Activated T-helper 2 cell treated with anti-CD3 and anti-CD28 coated beads, Interferon-gamma antibody, Interleukin-2, Interleukin-4, amounts not matched to agents 10 μg/mL and 5 μg/mL and 100 μg/mL, durations not matched to agents 14 hours and 24 hours and 36 hours (primary cell): ENCODE measurements at regions of chr21 and their contacts with region 1.

Region 1: DNA sequence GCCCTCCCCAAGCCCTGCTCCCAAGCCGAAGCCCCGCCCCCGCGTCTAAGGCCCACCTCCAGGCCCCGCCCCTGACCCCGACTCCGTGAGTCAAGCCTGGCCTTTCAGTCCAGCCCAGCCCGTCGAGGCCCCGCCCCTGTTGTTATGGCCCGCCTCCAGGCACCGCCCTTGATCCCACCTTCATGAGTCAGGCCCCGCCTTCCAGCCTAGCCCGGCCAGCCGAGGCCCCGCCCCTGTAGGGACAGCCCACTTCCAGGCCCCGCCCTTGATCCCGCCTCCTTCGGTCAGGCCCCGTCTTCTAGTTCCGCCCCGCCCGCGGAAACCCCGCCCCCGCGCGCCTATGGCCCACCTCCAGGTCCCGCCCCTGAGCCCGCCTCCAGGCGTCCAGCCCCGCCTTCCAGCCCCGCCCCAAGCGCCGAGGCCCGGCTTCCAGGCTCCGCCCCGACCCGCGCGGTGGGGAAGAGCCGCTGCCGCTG is 247 bp upstream of the DOP1B start:
- DNase-seq: peak; percentile 98
- H3K4me3 Mint-ChIP-seq: peak overlapping the region; percentile 76
- H3K27ac Mint-ChIP-seq: no peak overlapping the region
- H3K4me1 Mint-ChIP-seq: peaks cover 17% of the 10 kb centered on the region
- H3K27me3 Mint-ChIP-seq: no peaks in the 10 kb centered on the region

Region 2: DNA sequence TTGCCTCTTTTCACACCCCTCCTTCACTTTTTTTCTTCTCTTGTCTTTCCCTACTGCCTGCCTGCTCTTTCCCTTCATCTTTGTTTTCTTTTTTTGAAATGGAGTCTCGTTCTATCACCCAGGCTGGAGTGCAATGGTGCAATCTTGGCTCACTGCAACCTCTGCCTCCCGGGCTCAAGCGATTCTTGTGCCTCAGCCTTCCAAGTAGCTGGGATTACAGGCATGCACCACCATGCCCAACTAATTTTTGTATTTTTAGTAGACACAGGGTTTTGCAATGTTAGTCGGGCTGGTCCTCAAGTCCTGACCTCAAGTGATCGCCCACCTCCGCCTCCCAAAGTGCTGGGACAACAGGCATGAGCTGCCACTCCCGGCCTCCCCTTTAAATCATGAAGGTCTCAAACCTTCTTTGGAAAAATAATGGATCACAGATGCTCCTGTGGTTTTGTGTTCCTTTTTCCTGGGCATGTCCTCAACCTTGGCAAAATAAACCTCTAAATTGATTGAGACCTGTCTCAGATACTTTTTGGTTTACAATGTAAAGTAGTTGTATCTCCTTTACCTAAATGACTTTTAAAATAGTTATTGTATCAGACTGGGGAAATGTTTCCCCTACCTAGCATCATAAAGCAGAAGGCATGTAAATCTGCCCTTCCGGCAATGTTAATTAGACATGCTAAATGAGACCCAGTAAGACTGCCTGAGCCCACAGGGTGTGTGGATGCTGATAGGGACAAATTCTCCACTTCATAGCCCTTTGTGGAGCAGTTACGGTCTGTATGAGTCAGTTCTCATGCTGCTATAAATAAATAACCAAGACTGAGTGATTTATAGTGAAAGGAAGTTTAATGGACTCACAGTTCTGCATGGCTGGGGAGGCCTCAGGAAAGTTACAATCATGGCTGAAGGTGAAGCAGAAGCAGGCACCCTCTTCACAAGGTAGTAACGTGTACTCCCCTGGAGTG is 58.8 kb before region 1 on chr21:
- intact Hi-C with region 1: no loop called
- DNase-seq: no peak
- H3K4me3 Mint-ChIP-seq: no peak overlapping the region
- H3K27ac Mint-ChIP-seq: no peak overlapping the region
- H3K4me1 Mint-ChIP-seq: peaks cover 5% of the 10 kb centered on the region
- H3K27me3 Mint-ChIP-seq: no peaks in the 10 kb centered on the region

Region 3: DNA sequence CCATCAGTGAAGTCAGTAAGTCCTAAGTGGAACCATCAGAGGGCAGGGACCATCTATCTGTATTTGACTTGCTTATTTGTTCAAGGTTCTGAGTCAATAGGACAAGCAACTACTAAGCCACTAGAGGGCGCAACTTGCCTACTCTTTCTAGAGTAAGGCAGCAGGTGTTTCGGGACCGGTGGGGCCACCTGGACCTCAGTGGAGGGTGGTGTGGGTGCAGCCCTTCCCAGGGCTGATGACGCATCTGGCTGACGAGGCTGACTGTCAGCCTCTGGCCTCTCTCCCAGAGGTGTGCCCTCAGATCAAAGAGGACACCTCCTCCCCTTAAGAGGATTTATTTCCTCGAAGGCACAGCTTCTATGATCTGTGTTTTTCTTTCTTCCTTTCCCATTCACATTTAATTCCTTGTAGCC is 14.9 kb before region 1 on chr21:
- intact Hi-C with region 1: loop called (anchors 2 kb)
- DNase-seq: peak; percentile 70
- H3K4me3 Mint-ChIP-seq: no peak overlapping the region
- H3K27ac Mint-ChIP-seq: no peak overlapping the region
- H3K4me1 Mint-ChIP-seq: peaks cover 18% of the 10 kb centered on the region
- H3K27me3 Mint-ChIP-seq: no peaks in the 10 kb centered on the region

Region 4: GRCh38 chr21:36174780-36175179 is 18.4 kb after region 1 on chr21:
- intact Hi-C with region 1: loop called (anchors 1 kb)
- DNase-seq: no peak
- H3K4me3 Mint-ChIP-seq: no peak overlapping the region
- H3K27ac Mint-ChIP-seq: no peak overlapping the region
- H3K4me1 Mint-ChIP-seq: peaks cover 8% of the 10 kb centered on the region
- H3K27me3 Mint-ChIP-seq: no peaks in the 10 kb centered on the region

Region 5: GRCh38 chr21:36209626-36210171 is 53.3 kb after region 1 on chr21:
- intact Hi-C with region 1: loop called (anchors 1 kb)
- DNase-seq: peak; percentile 13
- H3K4me3 Mint-ChIP-seq: no peak overlapping the region
- H3K27ac Mint-ChIP-seq: no peak overlapping the region
- H3K4me1 Mint-ChIP-seq: peaks cover 28% of the 10 kb centered on the region
- H3K27me3 Mint-ChIP-seq: no peaks in the 10 kb centered on the region

Region 6: GRCh38 chr21:36319765-36320420 is 163.5 kb after region 1 on chr21 and contains the start of gene MORC3:
- intact Hi-C with region 1: loop called (anchors 1 kb)
- DNase-seq: peak; percentile 97
- H3K4me3 Mint-ChIP-seq: peak within 1 kb of the TSS; percentile 91
- H3K27ac Mint-ChIP-seq: peak within 1 kb of the TSS; percentile 92
- H3K4me1 Mint-ChIP-seq: peaks cover 25% of the 10 kb centered on the region
- H3K27me3 Mint-ChIP-seq: no peaks in the 10 kb centered on the region
- total RNA-seq, gene MORC3: 23.8 and 26.2 TPM in 2 replicates

Region 7: DNA sequence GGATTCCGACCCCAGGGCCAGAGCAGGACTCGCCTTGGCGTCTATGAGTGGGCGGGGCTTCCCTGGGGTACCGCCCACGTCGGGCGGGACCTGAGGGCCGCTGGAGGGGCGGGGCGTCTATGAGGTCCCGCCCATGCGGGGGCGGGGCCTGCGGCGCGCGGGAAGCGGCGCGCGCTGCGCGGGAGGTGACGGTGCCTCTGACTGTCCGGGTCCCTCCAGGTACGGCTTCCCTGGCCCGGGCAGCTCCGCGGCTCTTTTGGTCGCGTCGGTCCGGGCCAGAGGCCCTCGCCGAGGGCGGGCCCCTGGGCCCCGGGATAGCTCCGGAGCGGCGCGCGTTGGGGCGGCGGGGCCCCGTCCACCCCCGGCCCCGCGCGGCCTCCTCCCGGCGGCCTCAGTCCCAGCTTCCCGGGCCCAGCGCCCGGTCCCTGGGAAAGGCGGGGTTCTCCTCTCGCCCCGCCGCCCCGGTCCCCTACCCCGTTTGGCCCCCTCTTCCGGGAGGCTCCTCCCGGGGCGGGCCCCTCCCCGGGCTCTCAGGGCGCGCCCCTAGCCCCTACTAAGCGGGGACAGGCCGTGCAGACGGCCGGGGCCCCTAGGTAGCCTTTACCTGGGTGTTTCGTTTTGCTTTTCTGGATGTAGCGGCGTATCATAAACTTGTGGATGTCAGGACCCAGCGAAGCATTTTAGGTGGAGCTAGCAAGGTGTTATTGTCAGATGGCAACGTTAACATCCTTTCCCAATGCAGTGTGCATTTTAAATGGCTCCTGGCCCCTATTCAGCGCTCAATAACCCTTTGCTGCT is 229.1 kb after region 1 on chr21 and contains the start of gene CHAF1B:
- intact Hi-C with region 1: loop called (anchors 5 kb)
- DNase-seq: peak; percentile 83
- H3K4me3 Mint-ChIP-seq: peak within 1 kb of the TSS; percentile 82
- H3K27ac Mint-ChIP-seq: peak within 1 kb of the TSS; percentile 53
- H3K4me1 Mint-ChIP-seq: peaks cover 24% of the 10 kb centered on the region
- H3K27me3 Mint-ChIP-seq: no peaks in the 10 kb centered on the region
- total RNA-seq, gene CHAF1B: 34.2 and 35.8 TPM in 2 replicates

Region 8: GRCh38 chr21:36684957-36685714 is 528.8 kb after region 1 on chr21:
- intact Hi-C with region 1: no loop called
- DNase-seq: no peak
- H3K4me3 Mint-ChIP-seq: no peak overlapping the region
- H3K27ac Mint-ChIP-seq: no peak overlapping the region
- H3K4me1 Mint-ChIP-seq: no peaks in the 10 kb centered on the region
- H3K27me3 Mint-ChIP-seq: peaks cover 53% of the 10 kb centered on the region